ENCODE measurements at regions of chr19 and their contacts with region 1.

Region 1: GRCh38 chr19:14059093-14059480 is 2.8 kb downstream of the PALM3 start:
- DNase-seq: peak; percentile 78
- ATAC-seq: peak; percentile 50
- H3K4me3 Mint-ChIP-seq: peak overlapping the region; percentile 86
- H3K27ac Mint-ChIP-seq: no peak overlapping the region
- H3K4me1 Mint-ChIP-seq: peaks cover 16% of the 10 kb centered on the region
- H3K27me3 Mint-ChIP-seq: peaks cover 32% of the 10 kb centered on the region
- CTCF ChIP-seq: peak; percentile 87

Region 2: GRCh38 chr19:13872695-13873389 is 186.2 kb before region 1 on chr19:
- CTCF ChIA-PET with region 1: interaction called, 16 read pairs
- POLR2A ChIA-PET with region 1: no interaction called
- DNase-seq: peak; percentile 89
- ATAC-seq: peak; percentile 97
- H3K4me3 Mint-ChIP-seq: peak overlapping the region; percentile 56
- H3K27ac Mint-ChIP-seq: no peak overlapping the region
- H3K4me1 Mint-ChIP-seq: peaks cover 7% of the 10 kb centered on the region
- H3K27me3 Mint-ChIP-seq: peaks cover 98% of the 10 kb centered on the region
- CTCF ChIP-seq: no peak

Region 3: DNA sequence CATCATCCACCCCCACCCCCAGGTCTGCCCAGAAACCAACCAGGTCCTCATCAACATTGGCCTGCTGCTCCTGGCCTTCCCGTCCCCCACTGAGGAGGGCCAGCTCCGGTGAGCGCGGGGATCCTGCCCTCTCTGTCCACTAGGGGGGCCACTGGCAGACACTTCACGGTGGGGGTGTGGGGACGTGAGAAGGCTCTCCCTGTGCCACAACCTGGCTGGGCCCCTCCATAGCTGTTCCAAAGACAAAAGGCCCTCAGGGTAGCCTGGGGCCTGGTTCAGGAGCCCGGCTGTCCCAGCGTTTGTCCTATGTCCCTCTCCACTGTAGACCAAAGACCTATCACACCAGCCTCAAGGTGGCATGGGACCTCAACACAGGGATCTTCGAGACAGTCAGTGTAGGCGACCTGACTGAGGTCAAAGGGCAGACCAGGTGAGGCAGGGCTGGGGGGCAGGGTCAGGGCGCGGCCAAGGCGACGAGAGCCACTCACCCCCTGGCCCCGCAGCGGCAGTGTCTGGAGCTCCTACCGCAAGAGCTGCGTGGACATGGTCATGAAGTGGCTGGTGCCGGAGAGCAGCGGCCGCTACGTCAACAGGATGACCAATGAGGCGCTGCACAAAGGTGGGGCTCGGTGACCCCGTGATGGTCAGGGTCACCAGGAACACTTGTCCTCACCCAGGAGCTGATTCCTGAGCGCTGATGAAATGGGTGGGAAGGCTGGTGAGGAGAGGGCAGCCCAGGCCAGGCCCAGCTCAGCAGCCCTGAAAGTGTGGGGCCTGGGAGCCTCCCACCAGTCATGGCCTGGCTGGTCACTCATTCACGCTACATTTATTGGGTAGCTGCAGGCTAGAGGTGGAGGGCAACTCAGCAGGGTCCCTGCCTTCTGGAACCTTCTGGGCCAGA is 98.9 kb before region 1 on chr19:
- CTCF ChIA-PET with region 1: interaction called, 21 read pairs
- POLR2A ChIA-PET with region 1: interaction called, 3 read pairs
- DNase-seq: peak; percentile 61
- ATAC-seq: peak; percentile 9
- H3K4me3 Mint-ChIP-seq: no peak overlapping the region
- H3K27ac Mint-ChIP-seq: peak overlapping the region; percentile 87
- H3K4me1 Mint-ChIP-seq: peaks cover 6% of the 10 kb centered on the region
- H3K27me3 Mint-ChIP-seq: peaks cover 3% of the 10 kb centered on the region
- CTCF ChIP-seq: peak; percentile 8; the same call in 1 of the 2 replicates

Region 4: DNA sequence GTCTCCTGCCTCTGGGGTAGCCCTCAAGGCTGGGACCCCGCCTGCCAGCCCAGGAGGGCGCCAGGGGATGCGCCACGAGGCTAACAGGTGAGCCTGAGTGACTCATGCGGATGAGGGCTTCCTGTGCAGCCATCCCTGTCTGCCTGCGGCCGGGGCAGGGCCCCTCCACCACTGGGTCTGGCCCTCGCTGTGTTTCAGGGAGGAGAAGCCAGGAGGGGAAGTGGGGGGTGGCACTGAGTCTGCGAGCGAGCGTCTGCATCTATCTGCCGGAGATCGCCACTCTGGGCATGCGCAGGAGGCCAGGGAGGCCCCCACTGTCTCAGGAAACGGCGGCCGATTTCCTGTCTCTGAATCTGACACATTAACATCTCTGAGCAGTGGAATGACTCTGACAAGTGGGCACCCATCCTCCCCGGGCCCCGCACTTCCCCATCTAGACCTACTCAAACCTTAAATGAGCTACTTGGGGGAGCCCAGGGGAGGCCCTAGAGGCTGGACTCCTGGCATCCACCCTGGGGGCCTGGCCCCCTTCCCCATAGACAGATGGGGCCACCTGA is 72.7 kb before region 1 on chr19:
- CTCF ChIA-PET with region 1: interaction called, 11 read pairs
- POLR2A ChIA-PET with region 1: no interaction called
- DNase-seq: peak; percentile 83
- ATAC-seq: peak; percentile 69
- H3K4me3 Mint-ChIP-seq: peak overlapping the region; percentile 43
- H3K27ac Mint-ChIP-seq: peak overlapping the region; percentile 45; the same call in 1 of the 2 replicates
- H3K4me1 Mint-ChIP-seq: peaks cover 63% of the 10 kb centered on the region
- H3K27me3 Mint-ChIP-seq: no peaks in the 10 kb centered on the region
- CTCF ChIP-seq: no peak

Region 5: DNA sequence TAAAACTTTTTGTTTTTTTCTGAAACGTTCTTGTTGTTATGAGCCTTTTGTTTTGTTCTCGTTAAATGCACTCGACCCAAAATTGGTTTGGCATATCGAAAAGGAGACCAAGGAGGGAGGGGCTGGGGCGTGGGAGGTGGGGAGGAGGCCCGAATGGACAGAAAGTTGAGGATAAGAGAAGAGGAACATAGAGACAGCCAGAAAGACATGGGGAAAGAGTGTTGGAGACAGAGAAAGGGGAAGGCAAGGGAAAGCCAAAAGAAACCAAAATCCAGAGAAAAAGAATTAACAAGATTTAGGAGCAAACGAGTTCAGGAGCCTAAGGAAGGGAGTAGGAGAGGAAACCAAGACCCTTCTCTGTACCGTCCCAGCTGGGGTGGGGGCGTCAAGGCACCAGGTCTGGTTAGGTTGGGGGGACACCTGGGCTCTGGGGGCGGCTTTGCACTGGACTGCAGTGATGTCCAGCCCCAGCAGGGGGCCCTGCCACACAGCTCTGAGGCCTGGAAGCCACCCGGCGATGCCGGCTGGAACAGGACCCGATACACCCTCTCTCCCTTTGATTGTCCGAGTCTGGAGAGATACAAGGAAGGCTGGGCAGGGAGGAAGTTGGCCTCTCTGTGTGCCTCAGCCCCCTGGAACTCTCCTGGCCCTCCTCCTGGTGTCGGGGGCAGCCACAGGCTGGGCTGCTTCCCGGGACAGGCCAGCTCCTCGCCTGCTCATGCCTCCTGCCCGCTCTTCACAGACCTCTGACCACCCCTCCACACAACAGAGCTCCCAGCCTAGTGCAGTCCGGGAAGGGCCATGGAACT is 88.9 kb after region 1 on chr19:
- CTCF ChIA-PET with region 1: no interaction called
- POLR2A ChIA-PET with region 1: no interaction called
- DNase-seq: peak; percentile 74
- ATAC-seq: peak; percentile 47
- H3K4me3 Mint-ChIP-seq: no peak overlapping the region
- H3K27ac Mint-ChIP-seq: peak overlapping the region; percentile 70
- H3K4me1 Mint-ChIP-seq: peaks cover 27% of the 10 kb centered on the region
- H3K27me3 Mint-ChIP-seq: no peaks in the 10 kb centered on the region; the same call in 1 of the 2 replicates
- CTCF ChIP-seq: no peak

Region 6: DNA sequence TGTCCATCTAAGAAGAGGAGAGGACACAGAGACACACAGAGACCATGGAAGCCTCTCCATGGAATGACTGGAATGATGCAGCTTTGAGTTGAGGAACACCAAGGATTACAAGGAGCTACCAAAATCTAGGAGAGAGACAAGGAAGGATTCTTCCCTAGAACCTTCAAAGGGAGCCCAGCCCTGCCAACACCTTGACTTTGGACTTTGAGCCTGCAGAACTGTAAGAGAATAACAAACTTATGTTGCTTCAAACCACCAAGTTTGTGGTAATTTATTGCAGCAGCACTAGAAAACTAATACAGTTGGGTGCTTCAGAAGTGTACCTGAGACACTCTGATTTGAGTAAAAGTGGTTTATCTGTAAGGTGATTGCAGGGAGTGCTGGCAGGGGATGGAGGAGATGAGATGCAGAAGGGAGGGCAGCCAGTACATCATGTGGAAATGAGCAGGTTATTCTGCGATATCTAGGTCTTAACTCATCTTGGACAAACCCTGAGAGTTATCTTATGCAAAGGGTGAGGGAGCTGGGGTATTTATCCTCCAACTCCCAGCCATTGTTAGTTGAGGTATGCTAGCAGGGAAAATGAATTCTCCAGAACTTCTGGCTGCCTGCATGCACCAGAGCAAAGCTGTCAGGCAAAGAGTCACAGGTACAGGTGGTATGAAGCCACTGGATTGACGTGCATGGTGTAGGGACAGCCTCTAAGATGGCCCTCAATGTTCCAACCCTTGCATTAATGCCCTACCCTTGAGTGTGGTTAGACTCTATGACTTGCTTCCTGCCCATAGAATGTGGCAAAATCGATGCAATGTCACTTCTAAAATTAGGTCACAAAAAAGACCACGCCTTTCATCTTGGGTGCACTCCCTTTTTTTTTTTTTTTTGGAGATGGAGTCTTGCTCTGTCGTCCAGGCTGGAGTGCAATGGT is 178.2 kb after region 1 on chr19:
- CTCF ChIA-PET with region 1: no interaction called
- POLR2A ChIA-PET with region 1: no interaction called
- DNase-seq: no peak
- ATAC-seq: no peak
- H3K4me3 Mint-ChIP-seq: no peak overlapping the region
- H3K27ac Mint-ChIP-seq: no peak overlapping the region
- H3K4me1 Mint-ChIP-seq: peaks cover 3% of the 10 kb centered on the region; the same call in 1 of the 2 replicates
- H3K27me3 Mint-ChIP-seq: no peaks in the 10 kb centered on the region
- CTCF ChIP-seq: no peak

Region 7: DNA sequence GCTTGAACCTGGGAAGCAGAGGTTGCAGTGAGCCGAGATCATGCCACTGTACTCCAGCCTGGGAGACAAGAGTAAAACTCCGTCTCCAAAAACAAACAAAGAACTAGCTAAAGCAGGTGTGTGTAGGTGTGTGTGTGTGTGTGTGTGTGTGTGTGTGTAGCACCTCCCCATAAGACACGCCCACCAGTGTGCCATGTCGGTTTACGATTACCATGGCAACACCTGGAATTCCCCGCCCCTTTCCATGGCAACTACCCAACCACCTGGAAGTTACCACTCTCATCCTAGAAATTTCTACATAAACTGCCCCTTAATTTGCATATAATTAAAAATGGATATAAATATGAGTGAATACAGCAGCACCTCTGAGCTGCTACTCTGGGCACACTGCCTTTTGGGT is 241.2 kb after region 1 on chr19:
- CTCF ChIA-PET with region 1: no interaction called
- POLR2A ChIA-PET with region 1: no interaction called
- DNase-seq: peak; percentile 59
- ATAC-seq: peak; percentile 58
- H3K4me3 Mint-ChIP-seq: no peak overlapping the region
- H3K27ac Mint-ChIP-seq: no peak overlapping the region
- H3K4me1 Mint-ChIP-seq: peaks cover 23% of the 10 kb centered on the region
- H3K27me3 Mint-ChIP-seq: no peaks in the 10 kb centered on the region; the same call in 1 of the 2 replicates
- CTCF ChIP-seq: no peak